Ascending aorta (tissue), 2 donors: ENCODE measurements at regions of chr1 and their contacts with region 1.

Region 1: GRCh38 chr1:185759061-185759460 is 24.9 kb downstream of the HMCN1 start:
- DNase-seq: no peak
- H3K4me3 ChIP-seq: no peak overlapping the region
- H3K27ac ChIP-seq: no peak overlapping the region
- H3K4me1 ChIP-seq: no peaks in the 10 kb centered on the region
- H3K27me3 ChIP-seq: no peaks in the 10 kb centered on the region
- CTCF ChIP-seq: no peak

Region 2: GRCh38 chr1:185786524-185786923 is 27.5 kb after region 1 on chr1:
- intact Hi-C with region 1: loop called (anchors 5 kb)
- DNase-seq: no peak
- H3K4me3 ChIP-seq: no peak overlapping the region
- H3K27ac ChIP-seq: peak overlapping the region in 1 of 2 donors; percentile 60
- H3K4me1 ChIP-seq: peaks cover 2 to 28% of the 10 kb centered on the region in 2 donors
- H3K27me3 ChIP-seq: no peaks in the 10 kb centered on the region
- CTCF ChIP-seq: no peak

Region 3: DNA sequence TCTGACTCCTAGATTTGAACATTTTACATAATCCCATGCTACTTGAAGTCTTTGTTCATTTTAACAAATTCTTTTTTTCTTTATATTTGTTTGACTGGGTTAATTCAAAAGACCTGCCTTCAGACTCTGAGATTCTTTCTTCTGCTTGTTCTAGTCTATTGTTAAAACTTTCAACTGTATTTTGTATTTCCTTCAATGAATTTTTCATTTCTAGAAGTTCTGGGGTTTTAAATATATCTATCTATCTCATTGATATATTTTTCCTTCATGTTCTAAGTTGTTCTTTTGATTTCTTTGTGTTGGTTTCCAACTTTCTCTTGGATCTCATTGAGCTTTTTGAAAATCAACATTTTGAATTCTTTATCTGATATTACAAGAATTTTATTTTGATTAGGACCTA is 39.4 kb after region 1 on chr1:
- intact Hi-C with region 1: no loop called
- DNase-seq: no peak
- H3K4me3 ChIP-seq: no peak overlapping the region
- H3K27ac ChIP-seq: no peak overlapping the region
- H3K4me1 ChIP-seq: no peaks in the 10 kb centered on the region
- H3K27me3 ChIP-seq: no peaks in the 10 kb centered on the region
- CTCF ChIP-seq: no peak